ENCODE measurements at regions of chr12 and their contacts with region 1.

Region 1: DNA sequence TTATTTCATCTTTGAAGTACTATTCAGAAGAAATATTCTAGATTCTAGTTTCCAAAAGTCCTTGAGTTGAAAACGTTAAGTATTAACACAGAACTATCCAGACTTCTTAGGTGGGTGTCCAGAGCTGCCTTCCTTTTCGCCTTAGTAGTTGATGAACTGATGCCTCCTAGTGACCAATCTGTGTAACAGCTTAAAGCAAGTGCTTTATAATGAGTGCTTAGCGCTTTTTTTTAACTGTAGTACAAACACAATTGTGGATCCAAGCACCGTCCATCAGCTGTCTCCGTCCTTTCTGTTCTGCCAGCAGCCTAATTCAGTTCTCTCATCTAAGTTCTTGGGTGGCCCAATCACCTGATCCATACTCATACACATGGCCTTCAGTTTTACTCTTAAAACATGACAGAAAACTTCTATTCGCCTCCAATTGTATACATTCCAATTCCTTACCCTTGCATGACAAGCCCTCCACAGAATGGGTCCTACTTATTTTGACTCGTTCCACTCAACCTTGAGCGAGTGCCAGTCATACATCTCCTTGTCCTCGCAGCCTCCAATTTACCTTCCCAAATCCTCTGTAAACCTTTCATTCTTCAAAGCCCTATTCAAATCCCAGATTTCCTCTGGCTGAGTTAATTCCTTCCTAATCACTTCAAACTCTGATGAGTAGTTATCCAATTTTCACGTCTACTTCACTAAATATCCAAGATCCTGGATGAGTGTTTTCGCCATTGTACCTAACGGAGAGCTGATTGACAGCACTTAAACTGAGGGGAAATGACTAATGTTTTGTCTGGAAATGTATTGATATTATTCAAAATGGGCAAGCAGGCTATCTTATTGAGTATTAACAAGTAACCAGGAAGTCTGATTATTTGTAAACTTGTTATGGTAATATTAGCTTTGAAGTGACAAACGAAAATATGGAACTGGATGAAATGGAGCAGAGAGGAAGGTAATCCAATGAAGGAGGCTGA is 5.8 kb upstream of the PHLDA1 start:
- DNase-seq: no peak

Region 2: DNA sequence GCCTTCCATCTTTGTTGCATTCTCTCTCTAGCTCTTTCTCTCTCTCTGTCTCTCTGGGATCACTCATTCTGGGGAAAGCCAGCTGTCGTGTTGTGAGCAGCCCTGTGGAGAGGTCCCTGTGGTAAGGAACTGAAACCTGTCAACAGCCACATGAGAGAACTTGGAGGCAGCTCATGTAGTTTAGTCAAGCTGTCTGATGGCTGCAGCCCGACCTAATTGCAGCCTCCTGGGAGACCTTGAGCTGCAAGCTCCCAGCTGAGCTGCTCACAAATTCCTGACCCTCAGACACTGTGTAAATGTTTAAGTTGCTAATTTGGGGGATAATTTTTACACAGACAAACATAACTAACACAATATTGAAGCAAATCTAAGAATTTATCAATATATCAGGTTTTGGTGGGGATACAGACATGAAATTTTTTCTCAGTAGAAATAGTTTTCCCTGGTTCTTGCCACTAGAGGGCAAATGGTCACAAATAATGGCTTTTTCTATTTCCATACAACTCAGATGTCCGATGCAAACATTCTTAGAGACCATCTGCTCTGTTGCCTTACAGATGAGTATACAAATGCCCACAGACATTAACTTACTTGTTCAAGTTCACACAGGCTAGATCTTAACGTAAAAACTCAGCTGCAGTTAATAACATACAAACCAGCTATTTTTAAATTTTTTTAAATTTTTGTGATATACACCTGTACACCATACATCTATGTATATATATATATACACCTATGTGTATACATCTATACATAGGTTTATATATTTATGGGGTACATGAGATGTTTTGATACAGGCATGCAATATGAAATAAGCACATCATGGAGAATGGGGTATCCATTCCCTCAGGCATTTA is 510.5 kb before region 1 on chr12:
- intact Hi-C with region 1: loop called (anchors 1 kb)
- DNase-seq: no peak

Region 3: DNA sequence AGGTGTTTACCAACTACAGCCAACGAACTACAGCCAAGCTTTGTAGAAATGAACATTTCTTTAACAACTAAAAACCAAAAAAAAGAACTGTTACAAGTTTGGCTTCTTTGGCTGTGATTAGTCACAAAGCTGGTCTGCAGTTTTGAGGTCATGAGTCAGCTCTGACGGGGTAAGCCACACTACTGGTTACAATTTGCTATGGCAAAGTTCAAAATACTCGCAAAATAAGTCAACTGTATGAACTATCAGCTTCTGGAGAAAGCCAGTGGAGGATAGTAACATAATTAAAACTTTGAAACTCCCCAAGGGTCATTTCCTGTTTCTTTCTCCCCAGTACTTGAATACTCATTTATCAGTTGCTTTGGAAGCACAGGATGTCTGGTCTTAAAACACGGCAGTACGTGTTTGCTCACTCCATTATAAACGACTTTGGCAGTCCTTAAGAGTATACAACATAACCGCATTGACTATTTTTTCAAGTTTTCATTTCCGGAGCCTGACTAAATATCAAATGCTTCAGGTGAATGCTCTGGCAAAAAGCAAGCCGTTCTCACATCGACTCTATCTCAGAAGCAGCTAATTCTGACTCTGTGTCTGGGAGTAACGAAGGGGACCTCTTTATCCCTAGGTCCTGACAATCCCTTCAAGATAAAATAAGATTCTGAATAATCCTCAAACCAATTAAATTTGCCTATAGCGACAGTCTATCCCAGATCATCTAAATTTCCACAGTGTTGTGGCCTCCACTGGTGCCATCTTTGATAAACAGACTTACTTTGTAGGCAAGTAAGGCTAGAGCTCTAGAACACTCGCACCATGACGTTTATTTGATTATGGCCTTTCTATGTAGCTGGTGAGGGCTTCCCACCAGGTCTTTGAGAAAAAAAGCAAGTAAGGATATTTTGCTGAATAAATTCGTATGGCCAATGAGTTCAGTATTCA is 16.4 kb before region 1 on chr12:
- intact Hi-C with region 1: no loop called
- DNase-seq: no peak

Region 4: DNA sequence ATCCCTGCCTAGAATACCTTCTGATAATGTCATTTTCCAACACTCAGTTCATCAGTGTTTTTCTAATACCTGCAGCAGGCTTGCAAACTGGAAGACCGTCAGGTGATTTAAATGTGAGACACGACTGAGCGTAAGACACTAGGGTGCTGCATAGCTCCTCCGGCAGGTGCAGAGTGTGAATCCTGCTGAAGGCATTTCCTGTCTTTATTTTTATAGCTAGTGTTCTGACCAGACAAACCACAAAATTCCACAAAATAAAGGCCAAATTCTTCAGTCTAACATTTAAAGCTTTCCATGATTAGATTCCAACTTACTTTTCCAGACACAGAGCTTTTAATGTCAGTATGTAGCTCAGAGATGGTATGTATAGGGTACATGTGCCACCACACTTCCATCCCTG is 240.1 kb after region 1 on chr12:
- intact Hi-C with region 1: no loop called
- DNase-seq: no peak

Measured in cardiac septum (tissue), 1 donor.